A673 (cell line): ENCODE measurements at regions of chr20 and their contacts with region 1.

Region 1: GRCh38 chr20:4082406-4083097 is 67.2 kb upstream of the RNF24 start:
- DNase-seq: peak; percentile 52
- H3K4me3 ChIP-seq: no peak overlapping the region
- H3K27ac ChIP-seq: peak overlapping the region; percentile 28
- H3K4me1 ChIP-seq: peaks cover 16% of the 10 kb centered on the region
- H3K27me3 ChIP-seq: no peaks in the 10 kb centered on the region
- CTCF ChIP-seq: no peak

Region 2: DNA sequence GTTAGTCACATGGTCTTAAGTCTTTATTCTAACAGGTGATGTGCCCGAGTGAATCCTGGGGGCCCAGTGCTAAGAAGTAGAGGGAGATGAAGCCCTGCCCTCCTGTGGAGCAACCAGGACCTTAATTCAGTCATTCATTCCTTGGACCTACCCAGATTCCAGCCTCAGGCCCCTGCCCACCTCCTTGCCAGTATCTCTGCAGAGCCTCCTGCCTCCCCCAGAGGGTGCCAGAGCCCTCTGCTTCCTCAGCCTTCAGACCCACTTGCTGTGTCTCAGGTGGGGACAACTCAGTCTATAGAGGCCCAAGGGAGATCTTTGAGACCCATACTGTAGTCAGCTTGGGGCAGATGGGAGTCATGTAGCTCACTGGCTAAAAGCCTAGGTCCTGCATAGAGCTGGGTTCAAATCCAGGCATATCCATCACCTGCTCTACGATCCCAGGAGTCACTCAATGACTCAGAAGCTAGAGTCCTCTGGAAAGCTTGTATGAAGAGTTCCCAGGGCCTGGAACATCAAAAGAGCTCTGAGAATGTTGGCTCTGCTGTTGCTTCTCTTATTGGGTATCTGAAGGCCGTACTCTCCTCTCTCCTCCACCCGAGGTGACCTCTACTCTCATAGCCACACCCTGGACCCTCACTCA is 366.2 kb before region 1 on chr20:
- CTCF ChIA-PET with region 1: no interaction called
- POLR2A ChIA-PET with region 1: no interaction called
- intact Hi-C with region 1: loop called (anchors 2 kb)
- DNase-seq: peak; percentile 72
- H3K4me3 ChIP-seq: no peak overlapping the region
- H3K27ac ChIP-seq: no peak overlapping the region
- H3K4me1 ChIP-seq: no peaks in the 10 kb centered on the region
- H3K27me3 ChIP-seq: peaks cover 4% of the 10 kb centered on the region
- CTCF ChIP-seq: peak; percentile 88

Region 3: GRCh38 chr20:3786665-3787323 is 295.8 kb before region 1 on chr20 and contains the start of gene CENPB:
- CTCF ChIA-PET with region 1: interaction called, 10 read pairs
- POLR2A ChIA-PET with region 1: no interaction called
- intact Hi-C with region 1: loop called (anchors 1 kb)
- DNase-seq: peak; percentile 93
- H3K4me3 ChIP-seq: peak within 1 kb of the TSS; percentile 84
- H3K27ac ChIP-seq: peak within 1 kb of the TSS; percentile 87
- H3K4me1 ChIP-seq: peaks cover 19% of the 10 kb centered on the region
- H3K27me3 ChIP-seq: no peaks in the 10 kb centered on the region
- CTCF ChIP-seq: peak; percentile 68
- total RNA-seq, gene CENPB: 101 and 108 TPM in 2 replicates

Region 4: GRCh38 chr20:4014031-4014474 is 68.5 kb before region 1 on chr20:
- CTCF ChIA-PET with region 1: interaction called, 8 read pairs
- POLR2A ChIA-PET with region 1: no interaction called
- intact Hi-C with region 1: loop called (anchors 1 kb)
- DNase-seq: peak; percentile 73
- H3K4me3 ChIP-seq: peak overlapping the region; percentile 78
- H3K27ac ChIP-seq: peak overlapping the region; percentile 10
- H3K4me1 ChIP-seq: peaks cover 11% of the 10 kb centered on the region
- H3K27me3 ChIP-seq: no peaks in the 10 kb centered on the region
- CTCF ChIP-seq: peak; percentile 63